Naive thymus-derived CD8-positive, alpha-beta T cell (primary cell): ENCODE measurements at regions of chr10 and their contacts with region 1.

Region 1: GRCh38 chr10:12195603-12196506 is at the starts of genes CDC123 and NUDT5:
- DNase-seq: peak; percentile 73 to 92 (median 80)
- ATAC-seq: peak; percentile 93
- H3K4me3 Mint-ChIP-seq: peak within 1 kb of the TSS; percentile 94 to 100 (median 98)
- H3K27ac Mint-ChIP-seq: peak within 1 kb of the TSS; percentile 95 to 100 (median 99)
- H3K4me1 Mint-ChIP-seq: peaks cover 23 to 67% (median 63%) of the 10 kb centered on the region in 4 donors
- H3K27me3 Mint-ChIP-seq: no peaks in the 10 kb centered on the region
- polyA plus RNA-seq, gene CDC123: 83.1 to 91.0 (median 83.6) TPM
- polyA plus RNA-seq, gene NUDT5: 45.0 to 52.7 (median 49.5) TPM

Region 2: GRCh38 chr10:12181065-12181775 is 14.6 kb before region 1 on chr10:
- POLR2A ChIA-PET with region 1: interaction called, 10 read pairs
- DNase-seq: peak; percentile 19 to 87 (median 60)
- ATAC-seq: peak; percentile 99 to 100
- H3K4me3 Mint-ChIP-seq: peak overlapping the region in 9 of 10 donors; percentile 26 to 57 (median 53)
- H3K27ac Mint-ChIP-seq: peak overlapping the region; percentile 76 to 95 (median 92)
- H3K4me1 Mint-ChIP-seq: peaks cover 3 to 20% (median 16%) of the 10 kb centered on the region in 4 donors
- H3K27me3 Mint-ChIP-seq: no peaks in the 10 kb centered on the region